Heart right ventricle (tissue), 16 donors: ENCODE measurements at regions of chr6 and their contacts with region 1.

Region 1: DNA sequence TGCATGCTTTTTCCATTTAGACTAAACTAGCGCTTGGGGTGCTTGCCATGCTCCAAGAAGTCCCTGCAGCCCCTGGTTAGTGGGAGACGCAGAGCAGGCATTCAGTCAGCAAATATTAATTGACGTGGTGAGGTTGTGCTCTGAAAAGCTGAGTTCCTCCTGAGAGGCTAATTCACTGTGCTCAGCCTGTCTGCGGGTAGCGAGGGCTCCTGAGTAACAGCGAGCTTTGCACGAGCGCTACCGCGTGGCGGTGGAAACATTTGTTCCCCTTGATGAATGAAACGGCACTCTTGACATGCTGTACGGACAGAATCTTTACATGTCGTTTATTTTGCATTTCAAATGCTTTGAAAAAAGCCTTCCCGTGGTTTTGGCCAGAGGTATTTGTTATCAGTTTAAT is 170.6 kb upstream of the AGPAT4 start:
- DNase-seq: peak; percentile 21 to 32
- ATAC-seq: peak in 3 of 8 donors; percentile 47 to 77 (median 49)
- H3K4me3 ChIP-seq: no peak overlapping the region
- H3K27ac ChIP-seq: peak overlapping the region in 6 of 10 donors; percentile 34 to 61 (median 47)
- H3K4me1 ChIP-seq: peaks cover 0 to 21% (median 4%) of the 10 kb centered on the region in 9 donors
- H3K27me3 ChIP-seq: no peaks in the 10 kb centered on the region
- CTCF ChIP-seq: no peak

Region 2: DNA sequence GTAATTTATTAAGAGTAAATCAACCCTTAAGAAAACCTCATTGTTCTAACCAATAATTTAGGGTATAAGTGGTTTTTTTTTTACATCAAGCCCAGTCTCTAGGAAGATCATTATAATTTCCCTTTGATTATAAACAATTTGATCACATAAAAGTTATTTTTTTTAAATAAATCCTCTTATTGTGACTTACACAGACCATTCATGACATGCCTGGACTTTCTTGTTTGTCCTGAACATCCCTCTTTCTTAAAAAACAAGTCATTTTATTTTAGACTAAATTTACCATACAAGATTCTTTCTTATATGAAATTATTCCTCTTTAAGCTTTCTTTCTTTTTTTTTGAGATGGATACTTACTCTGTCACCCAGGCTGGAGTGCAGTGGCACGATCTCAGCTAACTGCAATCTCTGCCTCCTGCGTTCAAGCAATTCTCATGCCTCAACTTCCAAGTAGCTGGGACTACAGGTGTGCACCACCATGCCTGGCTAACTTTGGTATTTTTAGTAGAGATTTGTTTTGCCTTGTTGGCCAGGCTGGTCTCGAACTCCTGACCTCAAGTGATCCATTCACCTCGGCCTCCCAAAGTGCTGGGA is 117.0 kb before region 1 on chr6:
- intact Hi-C with region 1: no loop called
- DNase-seq: no peak
- ATAC-seq: no peak
- H3K4me3 ChIP-seq: no peak overlapping the region
- H3K27ac ChIP-seq: no peak overlapping the region
- H3K4me1 ChIP-seq: no peaks in the 10 kb centered on the region
- H3K27me3 ChIP-seq: peaks cover 0 to 2% (median 0%) of the 10 kb centered on the region in 7 donors
- CTCF ChIP-seq: no peak

Region 3: GRCh38 chr6:161482517-161482858 is 38.0 kb after region 1 on chr6:
- intact Hi-C with region 1: loop called in 2 of 10 experiments (anchors 5 kb)
- DNase-seq: no peak
- ATAC-seq: peak in 1 of 8 donors; percentile 29
- H3K4me3 ChIP-seq: no peak overlapping the region
- H3K27ac ChIP-seq: peak overlapping the region in 1 of 10 donors; percentile 23
- H3K4me1 ChIP-seq: peaks cover 0 to 36% (median 17%) of the 10 kb centered on the region in 9 donors
- H3K27me3 ChIP-seq: no peaks in the 10 kb centered on the region
- CTCF ChIP-seq: no peak

Region 4: GRCh38 chr6:161596807-161597520 is 152.5 kb after region 1 on chr6:
- intact Hi-C with region 1: no loop called
- DNase-seq: no peak
- ATAC-seq: no peak
- H3K4me3 ChIP-seq: no peak overlapping the region
- H3K27ac ChIP-seq: no peak overlapping the region
- H3K4me1 ChIP-seq: no peaks in the 10 kb centered on the region
- H3K27me3 ChIP-seq: no peaks in the 10 kb centered on the region
- CTCF ChIP-seq: no peak